ENCODE measurements at regions of chr9 and their contacts with region 1.

Region 1: DNA sequence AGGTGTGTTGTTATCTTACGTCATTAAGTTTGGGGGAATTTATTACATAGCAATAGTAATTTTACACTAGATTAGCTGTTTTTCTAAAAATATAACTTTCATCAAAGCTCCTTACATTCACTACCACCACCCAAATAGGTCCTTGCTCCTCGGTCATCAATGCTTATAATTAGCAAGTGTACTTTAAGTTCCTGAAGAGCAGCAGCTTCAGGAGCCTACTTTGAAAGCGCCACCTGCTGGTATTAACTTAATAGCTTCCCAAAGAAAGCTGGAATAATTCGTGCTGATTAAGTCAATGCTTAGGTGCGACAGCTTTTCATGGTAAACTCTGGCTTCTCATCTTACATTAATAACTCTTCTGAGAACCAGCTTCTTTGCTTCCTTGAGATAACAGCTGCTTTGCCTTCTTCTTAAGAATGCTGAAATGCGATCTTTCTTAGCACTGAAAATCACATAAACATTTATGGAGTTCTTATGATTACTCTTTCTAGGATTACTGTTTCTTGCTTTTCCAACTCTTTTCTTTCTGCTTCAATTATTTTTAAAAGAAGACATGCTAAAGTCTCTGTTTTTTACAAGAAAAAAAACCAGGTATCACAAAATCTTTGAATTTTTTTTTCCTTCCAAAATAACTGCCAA is 10.0 kb upstream of the C5 start:
- DNase-seq: peak in 1 of 5 donors; percentile 27
- ATAC-seq: peak in 1 of 4 donors; percentile 53
- H3K4me3 ChIP-seq: no peak overlapping the region
- H3K27ac ChIP-seq: no peak overlapping the region
- H3K4me1 ChIP-seq: peaks cover 0 to 6% (median 0%) of the 10 kb centered on the region in 12 donors
- H3K27me3 ChIP-seq: no peaks in the 10 kb centered on the region
- CTCF ChIP-seq: peak; percentile 55 to 84 (median 72)
- POLR2A ChIP-seq: no peak

Region 2: GRCh38 chr9:120619751-120620655 is 440.1 kb before region 1 on chr9:
- intact Hi-C with region 1: loop called in 3 of 10 experiments (anchors 5 to 10 kb)
- DNase-seq: peak in 3 of 5 donors; percentile 30 to 39 (median 32)
- ATAC-seq: peak in 3 of 4 donors; percentile 68 to 80 (median 76)
- H3K4me3 ChIP-seq: peak overlapping the region in 1 of 12 donors; percentile 13
- H3K27ac ChIP-seq: no peak overlapping the region
- H3K4me1 ChIP-seq: peaks cover 0 to 11% (median 0%) of the 10 kb centered on the region in 12 donors
- H3K27me3 ChIP-seq: no peaks in the 10 kb centered on the region
- CTCF ChIP-seq: peak; percentile 74 to 92 (median 82)
- POLR2A ChIP-seq: no peak

Region 3: GRCh38 chr9:120755827-120756434 is 304.2 kb before region 1 on chr9:
- intact Hi-C with region 1: loop called (anchors 1 to 5 kb)
- DNase-seq: peak in 2 of 5 donors; percentile 18 to 40
- ATAC-seq: peak in 3 of 4 donors; percentile 54 to 69 (median 68)
- H3K4me3 ChIP-seq: no peak overlapping the region
- H3K27ac ChIP-seq: no peak overlapping the region
- H3K4me1 ChIP-seq: peaks cover 0 to 27% (median 0%) of the 10 kb centered on the region in 12 donors
- H3K27me3 ChIP-seq: no peaks in the 10 kb centered on the region
- CTCF ChIP-seq: peak; percentile 82 to 95 (median 88)
- POLR2A ChIP-seq: peak in 1 of 2 donors; percentile 9

Region 4: GRCh38 chr9:120875954-120876841 is 183.9 kb before region 1 on chr9:
- intact Hi-C with region 1: loop called in 1 of 10 experiments (anchors 10 kb)
- DNase-seq: peak; percentile 84 to 92 (median 88)
- ATAC-seq: peak; percentile 38 to 84 (median 82)
- H3K4me3 ChIP-seq: peak overlapping the region; percentile 42 to 86 (median 75)
- H3K27ac ChIP-seq: peak overlapping the region; percentile 82 to 97 (median 92)
- H3K4me1 ChIP-seq: peaks cover 0 to 20% (median 6%) of the 10 kb centered on the region in 12 donors
- H3K27me3 ChIP-seq: no peaks in the 10 kb centered on the region
- CTCF ChIP-seq: peak in 1 of 12 donors; percentile 4
- POLR2A ChIP-seq: peak in 1 of 2 donors; percentile 43

Region 5: GRCh38 chr9:120985810-120986222 is 74.3 kb before region 1 on chr9:
- intact Hi-C with region 1: loop called (anchors 1 to 5 kb)
- DNase-seq: peak in 1 of 5 donors; percentile 9
- ATAC-seq: peak; percentile 41 to 73 (median 64)
- H3K4me3 ChIP-seq: no peak overlapping the region
- H3K27ac ChIP-seq: no peak overlapping the region
- H3K4me1 ChIP-seq: peaks cover 0 to 9% (median 0%) of the 10 kb centered on the region in 12 donors
- H3K27me3 ChIP-seq: no peaks in the 10 kb centered on the region
- CTCF ChIP-seq: peak in 11 of 12 donors; percentile 27 to 56 (median 50)
- POLR2A ChIP-seq: no peak

Region 6: DNA sequence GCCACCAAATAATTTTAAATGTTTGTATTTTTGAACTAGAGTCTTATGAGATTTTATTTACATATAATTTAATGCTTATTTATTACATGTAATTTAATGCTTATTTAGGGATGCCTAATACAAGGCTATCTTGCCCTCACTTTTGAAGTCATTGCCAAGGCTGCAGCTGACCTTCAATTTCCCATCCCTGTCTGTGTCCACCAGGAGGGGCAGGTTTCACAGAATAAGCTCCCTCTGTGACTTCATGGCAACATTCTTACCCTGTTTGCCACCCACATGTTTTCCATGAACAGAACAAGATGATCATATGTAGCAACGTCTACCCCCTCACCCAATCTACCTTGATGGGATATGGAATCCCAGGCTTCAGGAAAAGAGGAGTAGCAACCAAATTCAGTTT is 37.1 kb before region 1 on chr9:
- intact Hi-C with region 1: no loop called
- DNase-seq: no peak
- ATAC-seq: no peak
- H3K4me3 ChIP-seq: no peak overlapping the region
- H3K27ac ChIP-seq: no peak overlapping the region
- H3K4me1 ChIP-seq: no peaks in the 10 kb centered on the region
- H3K27me3 ChIP-seq: no peaks in the 10 kb centered on the region
- CTCF ChIP-seq: no peak
- POLR2A ChIP-seq: no peak